ENCODE measurements at regions of chr2 and their contacts with region 1.

Region 1: DNA sequence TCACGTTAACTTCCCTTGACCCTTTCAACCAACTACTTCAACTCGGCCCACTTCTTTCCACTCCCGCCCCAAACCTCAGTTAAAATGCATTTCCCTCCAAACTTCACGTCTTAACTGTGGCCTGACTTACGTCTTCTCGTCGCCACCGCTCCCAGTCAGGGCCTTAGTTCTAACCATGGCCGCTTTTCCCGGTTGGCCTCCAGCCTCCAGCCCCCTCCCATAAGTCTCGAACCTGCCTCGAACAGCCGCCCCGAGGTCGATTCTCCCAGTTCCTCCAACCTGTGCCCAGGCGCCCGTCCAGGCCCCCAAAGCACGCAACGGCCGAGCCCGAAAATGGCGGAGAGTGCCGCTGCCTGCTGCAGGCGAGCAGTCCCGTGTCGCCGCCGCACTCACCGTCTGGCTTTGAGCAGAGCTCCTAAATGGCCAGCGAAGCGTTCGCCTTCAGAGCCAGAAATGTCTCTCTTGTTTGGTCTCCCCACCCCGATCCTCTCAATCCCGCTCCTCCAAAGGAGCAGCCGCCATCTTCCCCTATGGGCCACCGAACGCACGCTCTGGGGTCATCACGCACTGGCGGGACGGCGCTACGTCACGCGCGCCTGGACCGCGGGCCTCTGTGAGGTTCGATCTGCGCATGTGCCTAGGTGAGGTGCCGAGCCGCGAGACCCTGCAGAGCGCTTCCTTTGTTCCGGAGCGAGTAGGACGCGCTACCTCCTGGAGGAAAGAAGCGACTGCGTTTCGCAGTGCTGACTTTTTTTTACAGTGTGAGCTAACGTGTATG is at the start of gene WDR33:
- DNase-seq: peak; percentile 94
- ATAC-seq: peak; percentile 99
- total RNA-seq, gene WDR33: 42.7 TPM

Region 2: GRCh38 chr2:127591221-127591923 is 219.4 kb before region 1 on chr2:
- intact Hi-C with region 1: loop called (anchors 5 kb)
- DNase-seq: no peak
- ATAC-seq: peak; percentile 83

Region 3: DNA sequence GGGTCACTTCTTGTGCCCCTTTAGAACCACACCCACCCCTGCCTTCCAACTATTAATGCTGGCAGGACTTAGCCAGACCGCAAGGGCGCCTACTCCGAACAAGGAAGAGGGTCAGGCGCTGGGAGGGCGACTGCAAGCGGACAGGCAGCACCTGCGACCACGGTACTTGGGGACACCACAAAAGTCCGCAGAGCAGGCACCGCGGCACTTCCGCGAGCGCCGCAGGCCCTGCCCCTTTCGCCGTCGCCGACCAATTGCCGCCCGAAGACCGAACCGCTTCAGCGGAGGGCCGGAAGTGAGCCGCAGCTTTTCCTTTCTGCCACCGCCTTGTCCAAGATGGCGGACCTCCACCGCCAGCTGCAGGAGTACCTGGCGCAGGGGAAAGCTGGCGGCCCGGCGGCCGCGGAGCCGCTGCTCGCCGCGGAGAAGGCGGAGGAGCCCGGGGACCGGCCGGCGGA is 109.6 kb before region 1 on chr2 and contains the start of gene SFT2D3:
- intact Hi-C with region 1: loop called (anchors 2 kb)
- DNase-seq: peak; percentile 96
- ATAC-seq: peak; percentile 92
- total RNA-seq, gene SFT2D3: 3.1 TPM

Region 4: DNA sequence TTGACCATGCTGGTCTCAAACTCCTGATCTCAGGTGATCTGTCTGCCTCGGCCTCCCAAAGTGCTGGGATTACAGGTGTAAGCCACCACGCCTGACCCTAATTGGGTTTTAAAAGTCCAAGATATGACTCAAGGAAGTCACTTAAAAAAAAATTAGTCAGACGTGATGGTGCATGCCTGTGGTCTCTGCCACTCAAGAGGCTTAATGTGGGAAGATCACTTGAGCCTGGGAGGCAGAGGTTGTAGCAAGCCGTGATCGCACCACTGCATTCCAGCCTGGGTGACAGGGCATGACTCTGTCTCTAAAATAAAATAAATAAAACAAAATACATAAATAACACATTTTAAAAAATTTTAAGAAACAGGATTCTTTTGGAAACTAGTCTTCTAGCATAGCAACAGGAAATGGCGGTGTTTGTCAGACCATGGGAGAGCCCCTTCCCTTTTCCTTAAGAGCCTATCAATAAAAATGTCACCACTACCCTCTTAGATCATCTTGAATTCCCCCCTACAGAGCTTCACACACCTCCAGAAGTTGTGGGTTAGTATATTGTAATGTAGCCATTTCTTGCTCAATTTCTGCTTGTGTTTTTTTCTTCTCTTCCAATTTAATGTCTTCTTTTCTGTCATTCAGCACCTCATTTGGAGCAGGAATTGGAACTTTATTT is 89.4 kb before region 1 on chr2:
- intact Hi-C with region 1: loop called (anchors 5 kb)
- DNase-seq: no peak
- ATAC-seq: no peak

Region 5: DNA sequence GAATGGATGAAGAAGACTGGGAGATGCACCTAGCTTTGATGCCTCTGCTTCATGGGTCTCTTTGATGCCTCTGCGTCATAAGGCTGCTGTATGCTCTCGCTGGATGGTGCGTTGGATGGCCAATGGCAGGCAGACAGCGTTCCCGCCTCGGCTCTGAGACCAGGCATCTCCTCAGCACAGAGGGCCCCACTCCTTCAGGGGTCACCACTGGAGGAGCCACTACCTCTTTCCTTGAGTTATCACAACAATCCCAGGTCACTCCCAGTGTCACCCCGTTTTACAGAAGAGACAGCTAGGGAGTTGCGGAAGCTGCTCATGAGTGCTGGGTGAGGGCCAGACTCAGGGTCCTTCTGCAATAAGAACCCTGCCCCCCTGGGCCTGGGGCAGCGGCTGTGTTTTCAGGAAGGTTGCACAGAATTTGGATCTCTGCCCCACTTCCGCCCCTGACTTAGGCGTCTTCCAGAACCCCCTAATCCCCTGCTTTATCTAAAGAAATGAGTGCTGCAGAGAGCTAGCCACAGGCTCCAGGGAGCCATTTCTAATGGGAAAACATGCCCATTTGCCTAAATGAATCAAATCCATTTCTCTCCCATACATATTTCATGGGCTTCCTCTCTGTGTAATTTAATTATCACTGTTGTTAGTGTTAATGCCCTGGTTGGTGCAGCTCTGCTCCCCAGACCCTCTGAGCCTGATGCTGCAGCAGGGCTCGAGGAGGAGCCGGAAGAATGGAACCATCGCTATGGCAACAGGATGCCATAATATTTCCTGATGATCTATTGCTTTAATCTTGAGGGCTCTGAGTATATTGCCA is 639.6 kb after region 1 on chr2:
- intact Hi-C with region 1: no loop called
- DNase-seq: no peak
- ATAC-seq: no peak